PC-9 (cell line): ENCODE measurements at regions of chr10 and their contacts with region 1.

Region 1: DNA sequence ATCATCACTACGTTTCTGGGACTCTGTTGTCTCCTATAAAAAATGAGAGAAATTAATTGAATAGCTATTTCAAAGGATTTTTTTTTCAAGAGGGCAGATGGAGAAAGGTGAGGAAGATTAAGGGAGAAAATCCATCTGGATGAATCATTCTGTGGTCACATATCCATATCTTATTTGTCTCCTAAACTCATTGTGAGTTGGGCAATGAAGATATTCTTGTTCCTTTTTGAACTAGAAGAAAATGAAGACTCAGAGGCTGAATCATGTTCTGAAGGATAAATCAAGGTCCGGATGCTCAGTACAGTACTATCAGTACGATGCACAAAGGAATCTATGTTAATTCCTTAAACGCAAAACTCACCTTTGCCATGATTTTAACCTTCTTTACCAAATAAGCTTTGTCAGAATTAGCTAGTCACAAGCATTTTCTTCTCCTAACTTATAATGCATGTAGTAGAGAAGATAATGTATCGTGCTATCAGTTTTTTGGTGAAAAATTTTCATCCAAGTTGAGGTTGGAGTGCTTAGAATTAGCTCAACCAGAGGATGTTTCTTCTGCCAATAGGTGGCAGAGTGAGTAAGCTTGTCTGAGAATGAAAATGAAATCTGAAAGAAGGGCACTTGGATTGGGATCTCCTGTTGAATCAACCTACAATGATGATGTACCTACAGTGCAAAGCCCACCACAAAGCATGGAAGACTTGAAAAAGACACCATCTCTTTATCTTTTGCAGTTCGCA is 446.9 kb downstream of the KIF20B start:
- DNase-seq: peak in 1 of 2 experiments; percentile 44
- H3K4me3 ChIP-seq: no peak overlapping the region
- H3K27ac ChIP-seq: no peak overlapping the region
- H3K4me1 ChIP-seq: no peaks in the 10 kb centered on the region
- H3K27me3 ChIP-seq: no peaks in the 10 kb centered on the region
- CTCF ChIP-seq: peak; percentile 43; the same call in 1 of the 2 replicates

Region 2: GRCh38 chr10:89954787-89955566 is 193.3 kb before region 1 on chr10:
- CTCF ChIA-PET with region 1: no interaction called
- POLR2A ChIA-PET with region 1: no interaction called
- intact Hi-C with region 1: loop called (anchors 10 kb)
- DNase-seq: no peak
- H3K4me3 ChIP-seq: no peak overlapping the region
- H3K27ac ChIP-seq: no peak overlapping the region
- H3K4me1 ChIP-seq: no peaks in the 10 kb centered on the region
- H3K27me3 ChIP-seq: no peaks in the 10 kb centered on the region
- CTCF ChIP-seq: peak; percentile 61

Region 3: GRCh38 chr10:90381468-90381867 is 233.2 kb after region 1 on chr10:
- CTCF ChIA-PET with region 1: no interaction called
- POLR2A ChIA-PET with region 1: interaction called, 14 read pairs
- intact Hi-C with region 1: no loop called
- DNase-seq: no peak
- H3K4me3 ChIP-seq: no peak overlapping the region
- H3K27ac ChIP-seq: no peak overlapping the region
- H3K4me1 ChIP-seq: no peaks in the 10 kb centered on the region
- H3K27me3 ChIP-seq: no peaks in the 10 kb centered on the region
- CTCF ChIP-seq: no peak

Region 4: GRCh38 chr10:90592638-90593302 is 444.5 kb after region 1 on chr10:
- CTCF ChIA-PET with region 1: no interaction called
- POLR2A ChIA-PET with region 1: no interaction called
- intact Hi-C with region 1: loop called (anchors 2 kb)
- DNase-seq: peak in 1 of 2 experiments; percentile 63
- H3K4me3 ChIP-seq: no peak overlapping the region
- H3K27ac ChIP-seq: no peak overlapping the region
- H3K4me1 ChIP-seq: no peaks in the 10 kb centered on the region
- H3K27me3 ChIP-seq: no peaks in the 10 kb centered on the region
- CTCF ChIP-seq: peak; percentile 62

Region 5: DNA sequence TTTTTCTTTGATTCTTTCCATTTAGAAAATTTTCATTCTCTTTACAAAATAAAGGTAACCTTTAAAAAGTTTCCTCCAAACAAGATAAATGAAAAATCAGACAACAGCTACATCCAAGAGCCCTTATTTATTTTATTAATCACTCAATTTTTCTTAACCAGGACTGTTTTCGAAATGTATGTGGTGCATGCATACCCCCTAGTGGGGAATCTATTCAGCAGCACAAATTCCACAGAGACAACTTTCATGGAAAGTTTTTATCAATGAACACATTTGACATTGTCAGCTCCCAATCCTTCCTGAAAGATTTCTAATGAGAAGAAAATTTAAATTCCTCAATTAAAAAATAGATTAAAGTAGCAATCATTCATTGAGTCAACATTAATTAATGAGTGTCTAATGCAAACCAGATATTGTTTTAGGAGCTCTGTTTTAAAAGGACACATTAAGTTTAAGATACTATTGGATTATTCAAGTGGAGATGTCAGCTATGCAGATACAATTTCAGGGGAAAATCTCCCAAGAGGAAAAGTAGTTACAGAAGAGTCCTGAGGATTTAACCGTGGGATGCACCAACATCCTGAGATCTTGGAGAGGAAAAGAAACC is 714.7 kb after region 1 on chr10:
- CTCF ChIA-PET with region 1: no interaction called
- POLR2A ChIA-PET with region 1: no interaction called
- intact Hi-C with region 1: loop called (anchors 2 kb)
- DNase-seq: no peak
- H3K4me3 ChIP-seq: no peak overlapping the region
- H3K27ac ChIP-seq: no peak overlapping the region
- H3K4me1 ChIP-seq: peaks cover 16% of the 10 kb centered on the region
- H3K27me3 ChIP-seq: no peaks in the 10 kb centered on the region
- CTCF ChIP-seq: peak; percentile 77